Cardiac septum (tissue), 1 donor: ENCODE measurements at regions of chr10 and their contacts with region 1.

Region 1: DNA sequence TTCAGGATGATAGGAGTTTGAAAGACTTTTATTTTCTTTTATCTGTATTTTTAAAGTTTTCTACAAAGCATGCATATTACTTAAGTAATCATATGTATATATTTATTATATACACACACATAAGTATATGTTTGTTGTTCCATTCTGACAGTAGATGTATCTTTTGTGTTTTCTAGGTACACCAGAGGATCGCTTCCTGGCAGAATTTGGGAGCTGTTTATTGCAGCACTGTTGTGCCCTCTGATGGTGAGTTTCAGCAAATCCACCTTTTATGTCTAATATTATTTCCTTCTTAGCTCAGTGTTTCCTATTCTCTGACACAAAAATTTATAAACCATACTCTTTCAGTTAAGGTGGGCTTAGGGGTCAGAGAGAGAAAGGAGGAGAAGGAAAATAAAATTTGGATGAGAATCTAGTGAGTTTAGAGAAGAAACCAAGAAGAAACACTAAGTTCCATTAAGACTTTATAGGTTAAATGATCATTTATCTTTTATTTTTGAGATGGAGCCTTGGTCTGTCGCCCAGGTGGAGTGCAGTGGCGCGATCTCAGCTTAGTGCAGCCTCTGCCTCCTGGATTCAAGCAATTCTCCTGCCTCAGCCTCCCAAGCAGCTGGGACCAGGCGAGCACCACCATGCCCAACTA is 59.2 kb upstream of the OIT3 start:
- DNase-seq: no peak

Region 2: DNA sequence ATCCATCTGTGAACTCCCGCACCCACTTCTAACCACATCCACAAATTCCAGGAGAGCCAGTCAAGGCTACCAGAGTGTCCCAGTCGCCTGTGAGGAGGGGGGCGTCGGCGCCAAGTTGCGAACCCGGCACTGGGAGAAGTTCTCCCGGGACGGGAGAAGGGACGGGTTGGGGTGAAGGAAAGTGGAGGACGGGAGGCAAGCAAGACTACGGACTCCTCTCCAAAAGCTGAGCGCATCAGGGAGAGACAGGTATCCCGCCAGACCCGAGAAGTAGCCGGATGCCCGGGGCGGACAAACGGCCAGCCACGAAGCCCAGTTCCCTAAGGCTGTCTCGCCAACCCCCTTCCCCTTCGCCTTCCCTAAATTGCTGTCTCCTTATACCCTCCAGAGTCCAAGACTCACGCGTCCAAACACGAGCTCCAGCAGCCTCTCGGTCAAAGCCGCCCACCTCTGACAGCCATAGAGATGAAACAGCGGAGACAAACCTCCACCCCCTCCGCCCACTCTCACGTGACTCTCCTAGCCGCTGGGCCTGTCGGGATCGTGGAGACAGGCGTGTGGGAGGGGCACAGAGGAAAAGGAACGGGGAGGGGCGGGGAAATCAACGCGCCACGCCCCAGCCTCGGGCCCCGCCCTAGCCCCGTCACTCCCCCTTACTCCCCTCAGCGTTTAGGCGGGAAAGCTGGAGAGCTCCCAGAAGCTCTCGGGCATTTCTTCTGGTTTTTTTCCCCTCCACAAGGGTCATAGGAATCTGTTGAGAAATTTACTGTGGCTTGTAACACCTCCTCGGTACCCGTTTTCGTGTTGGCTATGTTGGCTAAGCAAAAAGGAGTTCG is 208.5 kb before region 1 on chr10 and contains the start of gene MICU1:
- intact Hi-C with region 1: loop called (anchors 10 kb)
- DNase-seq: peak; percentile 98
- total RNA-seq, gene MICU1: 43.2 TPM

Region 3: DNA sequence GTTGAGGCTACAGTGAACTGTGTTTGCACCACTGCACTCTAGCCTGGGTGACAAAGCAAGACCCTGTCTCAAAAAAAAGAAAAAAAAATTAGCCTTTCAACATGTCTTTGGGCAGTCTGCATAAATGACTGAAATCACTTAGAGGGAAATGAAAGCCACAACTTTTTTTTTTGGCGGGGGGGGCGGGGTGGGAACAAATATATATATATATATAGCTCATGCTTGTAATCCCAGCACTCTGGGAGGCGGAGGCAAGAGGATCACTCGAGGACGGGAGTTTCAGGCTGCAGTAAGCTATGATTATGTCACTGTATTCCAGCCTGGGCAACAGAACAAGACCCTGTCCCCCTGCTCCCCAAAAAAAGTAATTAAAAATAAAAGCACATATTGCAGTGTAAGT is 185.0 kb before region 1 on chr10:
- intact Hi-C with region 1: no loop called
- DNase-seq: no peak

Region 4: GRCh38 chr10:72753760-72754231 is 80.5 kb before region 1 on chr10:
- intact Hi-C with region 1: no loop called
- DNase-seq: no peak

Region 5: GRCh38 chr10:72784551-72785351 is 49.6 kb before region 1 on chr10:
- intact Hi-C with region 1: no loop called
- DNase-seq: no peak